HepG2 (cell line): ENCODE measurements at regions of chr3 and their contacts with region 1.

Region 1: DNA sequence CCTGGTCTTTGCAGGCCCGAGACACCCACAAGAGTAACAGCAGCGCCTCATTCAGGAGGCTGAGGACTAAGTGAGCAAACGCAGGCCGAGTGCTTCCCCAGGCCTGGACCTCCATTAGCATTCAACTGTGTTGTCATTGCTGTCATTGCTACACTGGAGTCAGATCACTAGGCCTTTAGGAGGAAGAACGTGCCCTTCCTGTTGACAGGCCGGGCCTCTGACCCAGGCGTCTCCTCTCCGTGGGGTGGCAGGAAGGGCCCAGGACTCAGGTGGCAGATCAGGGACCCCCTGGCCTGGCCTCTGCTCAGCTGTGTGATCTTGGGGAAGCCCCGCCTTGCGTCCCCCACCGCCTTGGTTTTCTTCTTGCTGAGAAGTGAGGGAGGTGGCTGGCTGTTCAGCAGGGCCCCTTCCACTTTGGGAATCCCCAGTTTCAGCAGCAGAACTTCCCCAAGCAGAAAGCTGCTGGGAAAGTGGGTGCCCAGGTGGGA is 19.1 kb downstream of the ZDHHC19 start:
- DNase-seq: peak; percentile 35
- ATAC-seq: peak; percentile 49
- H3K4me3 ChIP-seq: peak overlapping the region in 1 of 3 experiments; percentile 48; a peak in 1 of 6 replicates
- H3K27ac ChIP-seq: no peak overlapping the region
- H3K4me1 ChIP-seq: peaks cover 58% of the 10 kb centered on the region
- H3K27me3 ChIP-seq: peaks cover 3 to 47% of the 10 kb centered on the region in 2 experiments; a peak in 4 of 5 replicates
- CTCF ChIP-seq: peak; percentile 63
- EP300 ChIP-seq: no peak
- POLR2A ChIP-seq: no peak
- RAD21 ChIP-seq: no peak

Region 2: DNA sequence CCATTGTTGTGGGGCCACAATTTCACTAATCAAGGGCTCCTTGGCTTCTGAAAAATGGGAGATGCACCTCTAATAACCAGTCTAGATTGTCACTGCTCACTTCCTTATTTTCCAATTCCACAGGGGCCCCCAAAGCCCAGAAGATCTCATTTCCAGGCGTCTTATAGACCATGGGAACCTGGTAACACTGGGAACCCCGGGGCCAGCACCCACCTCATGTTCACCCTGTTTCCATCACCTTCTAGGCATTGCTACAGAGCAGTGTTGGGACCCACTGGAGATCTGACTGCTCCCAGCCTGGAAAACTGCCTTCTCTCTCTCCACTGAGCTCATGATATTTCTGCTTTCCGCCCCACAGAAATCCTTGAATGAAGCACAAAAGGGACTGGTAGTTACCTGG is 171.7 kb before region 1 on chr3:
- CTCF ChIA-PET with region 1: interaction called, 15 read pairs
- POLR2A ChIA-PET with region 1: no interaction called
- in situ Hi-C with region 1: loop called (anchors 5 kb)
- intact Hi-C with region 1: loop called (anchors 1 kb)
- DNase-seq: no peak
- ATAC-seq: no peak
- H3K4me3 ChIP-seq: no peak overlapping the region
- H3K27ac ChIP-seq: no peak overlapping the region
- H3K4me1 ChIP-seq: no peaks in the 10 kb centered on the region
- H3K27me3 ChIP-seq: peaks cover 0 to 9% of the 10 kb centered on the region in 2 experiments; a peak in 1 of 5 replicates
- CTCF ChIP-seq: no peak
- EP300 ChIP-seq: no peak
- POLR2A ChIP-seq: no peak
- RAD21 ChIP-seq: no peak

Region 3: GRCh38 chr3:196141052-196141865 is 50.8 kb before region 1 on chr3:
- CTCF ChIA-PET with region 1: no interaction called
- POLR2A ChIA-PET with region 1: no interaction called
- in situ Hi-C with region 1: no loop called
- intact Hi-C with region 1: loop called (anchors 1 kb)
- DNase-seq: no peak
- ATAC-seq: no peak
- H3K4me3 ChIP-seq: no peak overlapping the region
- H3K27ac ChIP-seq: no peak overlapping the region
- H3K4me1 ChIP-seq: peaks cover 22% of the 10 kb centered on the region
- H3K27me3 ChIP-seq: peaks cover 3 to 10% of the 10 kb centered on the region in 2 experiments; a peak in 3 of 5 replicates
- CTCF ChIP-seq: no peak
- EP300 ChIP-seq: no peak
- POLR2A ChIP-seq: no peak
- RAD21 ChIP-seq: no peak